Activated CD4-positive, alpha-beta T cell treated with anti-CD3 and anti-CD28 coated beads for 36 hours (primary cell): ENCODE measurements at regions of chr13 and their contacts with region 1.

Region 1: DNA sequence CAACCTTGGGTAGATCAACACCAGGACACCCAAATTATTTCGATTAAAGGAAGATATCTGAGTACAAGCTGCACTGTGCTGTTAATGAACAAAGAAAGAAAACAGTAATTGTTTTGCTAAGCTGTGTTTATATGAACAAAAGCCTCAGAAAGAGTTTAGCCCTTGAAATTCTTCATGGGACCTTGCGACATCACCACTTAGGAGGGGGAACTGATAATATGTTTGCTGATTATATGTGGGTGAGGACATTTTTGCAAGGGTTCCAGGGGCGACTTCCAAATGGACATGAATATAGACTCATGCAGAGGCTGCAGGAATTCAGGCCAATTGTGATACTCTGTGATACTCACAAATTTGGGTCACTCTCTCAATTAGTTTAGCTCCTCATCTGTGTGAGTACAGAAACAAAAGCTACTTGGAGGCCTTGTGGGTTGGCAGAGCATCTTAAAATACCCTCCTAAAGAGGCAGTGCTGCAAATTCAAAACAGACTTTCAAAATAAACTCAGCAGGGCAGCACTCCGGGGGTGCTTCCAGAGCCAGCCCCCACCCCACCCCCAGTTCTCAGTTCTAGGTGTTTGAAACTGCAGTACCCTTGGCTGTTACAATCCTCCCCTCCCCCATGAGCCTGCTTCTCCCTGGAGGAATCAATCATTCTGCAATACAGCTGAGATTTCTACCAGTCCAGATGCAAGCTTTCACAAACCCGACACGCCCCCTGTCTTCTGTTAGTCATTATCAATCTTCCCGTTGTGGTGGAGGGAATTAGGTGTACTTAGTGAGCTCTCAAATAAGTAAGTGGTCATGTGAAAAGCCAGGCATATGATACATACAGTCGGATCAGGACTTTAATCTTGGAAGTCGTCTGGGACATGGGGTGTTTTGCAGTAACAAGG is 97.0 kb upstream of the MBNL2 start:
- DNase-seq: peak; percentile 69
- ATAC-seq: peak; percentile 61
- H3K4me3 Mint-ChIP-seq: no peak overlapping the region
- H3K27ac Mint-ChIP-seq: no peak overlapping the region
- H3K4me1 Mint-ChIP-seq: peaks cover 36% of the 10 kb centered on the region
- H3K27me3 Mint-ChIP-seq: peaks cover 32% of the 10 kb centered on the region

Region 2: DNA sequence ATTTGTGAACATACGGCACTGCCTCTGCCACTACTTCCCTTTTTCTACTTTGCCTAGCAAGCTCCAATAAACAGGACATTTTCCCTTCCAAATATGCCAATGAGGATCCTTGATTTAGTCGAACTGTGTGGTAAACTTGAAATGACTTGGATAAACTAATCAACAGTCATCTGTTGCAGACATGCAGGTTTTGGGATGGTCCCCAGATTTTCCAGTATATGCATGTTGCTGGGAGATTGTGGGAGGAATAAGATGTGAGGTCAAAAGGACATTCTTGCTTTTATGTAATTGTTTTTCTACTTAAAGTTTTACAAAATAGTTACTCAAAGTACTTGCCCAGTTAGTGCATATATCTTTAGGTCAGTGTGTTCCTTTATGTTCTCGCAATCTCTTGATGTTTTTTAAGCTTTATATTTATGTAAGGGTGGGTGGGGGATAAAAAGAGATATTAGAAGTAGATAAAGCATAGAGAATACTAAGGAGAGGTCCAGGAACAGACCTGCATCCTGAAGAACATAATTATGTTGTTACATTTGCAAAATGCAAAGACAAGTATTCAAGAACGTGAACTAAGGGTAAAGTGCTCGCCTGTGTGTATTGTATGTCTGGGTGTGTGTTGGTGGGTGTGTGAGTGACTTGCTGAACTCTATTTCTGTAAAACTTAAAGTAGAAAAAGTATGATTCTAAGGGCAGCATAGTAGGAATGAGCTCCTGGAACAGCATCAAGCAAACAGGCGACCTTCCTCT is 42.5 kb before region 1 on chr13:
- CTCF ChIA-PET with region 1: no interaction called
- POLR2A ChIA-PET with region 1: no interaction called
- intact Hi-C with region 1: no loop called
- DNase-seq: no peak
- ATAC-seq: no peak
- H3K4me3 Mint-ChIP-seq: no peak overlapping the region
- H3K27ac Mint-ChIP-seq: no peak overlapping the region
- H3K4me1 Mint-ChIP-seq: no peaks in the 10 kb centered on the region
- H3K27me3 Mint-ChIP-seq: peaks cover 4% of the 10 kb centered on the region

Region 3: GRCh38 chr13:97109841-97110492 is 15.2 kb before region 1 on chr13:
- CTCF ChIA-PET with region 1: interaction called, 24 read pairs
- POLR2A ChIA-PET with region 1: no interaction called
- intact Hi-C with region 1: no loop called
- DNase-seq: peak; percentile 88
- ATAC-seq: peak; percentile 93
- H3K4me3 Mint-ChIP-seq: no peak overlapping the region
- H3K27ac Mint-ChIP-seq: no peak overlapping the region
- H3K4me1 Mint-ChIP-seq: peaks cover 14% of the 10 kb centered on the region
- H3K27me3 Mint-ChIP-seq: peaks cover 12% of the 10 kb centered on the region

Region 4: DNA sequence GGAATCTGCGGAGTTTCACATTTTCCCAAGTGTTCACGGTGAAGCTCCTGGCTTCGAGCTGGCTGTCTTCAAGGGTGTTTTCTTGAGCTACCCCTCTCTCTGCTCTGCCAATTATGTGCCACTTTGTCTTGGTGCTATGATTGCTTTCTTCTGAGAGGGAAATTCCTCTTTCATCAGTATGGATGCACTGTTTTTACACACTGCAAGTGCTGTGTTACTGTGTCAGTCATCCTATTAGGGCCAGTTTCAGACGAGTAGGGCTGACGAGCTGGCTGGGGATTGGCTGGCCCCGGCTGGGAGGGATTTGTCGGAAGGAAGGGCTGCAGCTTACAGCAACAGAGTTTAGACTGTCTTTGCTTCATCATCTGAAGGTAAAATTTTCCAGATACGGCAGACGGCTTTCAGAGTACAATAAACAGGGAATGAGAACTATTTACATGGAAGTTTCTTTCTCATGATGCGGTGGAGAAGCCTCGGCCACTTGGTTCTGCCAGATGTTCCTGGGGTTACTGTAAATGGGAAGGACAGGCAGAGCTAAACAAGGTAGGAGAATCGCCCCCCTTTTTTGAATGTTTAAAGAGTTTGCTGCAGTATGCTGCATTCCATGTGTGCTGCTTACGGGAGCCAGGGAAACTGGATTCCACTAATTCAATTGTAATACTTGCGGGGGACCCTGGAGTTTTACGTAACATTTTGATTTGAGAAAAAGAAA is 97.0 kb after region 1 on chr13 and contains the start of gene MBNL2:
- CTCF ChIA-PET with region 1: interaction called, 3 read pairs
- POLR2A ChIA-PET with region 1: interaction called, 3 read pairs
- intact Hi-C with region 1: loop called in 1 of 2 experiments (anchors 1 kb)
- DNase-seq: peak; percentile 93
- ATAC-seq: peak; percentile 98
- H3K4me3 Mint-ChIP-seq: peak within 1 kb of the TSS; percentile 80
- H3K27ac Mint-ChIP-seq: peak within 1 kb of the TSS; percentile 95
- H3K4me1 Mint-ChIP-seq: peaks cover 31% of the 10 kb centered on the region
- H3K27me3 Mint-ChIP-seq: no peaks in the 10 kb centered on the region
- total RNA-seq, gene MBNL2: 16.7 to 24.5 TPM

Region 5: DNA sequence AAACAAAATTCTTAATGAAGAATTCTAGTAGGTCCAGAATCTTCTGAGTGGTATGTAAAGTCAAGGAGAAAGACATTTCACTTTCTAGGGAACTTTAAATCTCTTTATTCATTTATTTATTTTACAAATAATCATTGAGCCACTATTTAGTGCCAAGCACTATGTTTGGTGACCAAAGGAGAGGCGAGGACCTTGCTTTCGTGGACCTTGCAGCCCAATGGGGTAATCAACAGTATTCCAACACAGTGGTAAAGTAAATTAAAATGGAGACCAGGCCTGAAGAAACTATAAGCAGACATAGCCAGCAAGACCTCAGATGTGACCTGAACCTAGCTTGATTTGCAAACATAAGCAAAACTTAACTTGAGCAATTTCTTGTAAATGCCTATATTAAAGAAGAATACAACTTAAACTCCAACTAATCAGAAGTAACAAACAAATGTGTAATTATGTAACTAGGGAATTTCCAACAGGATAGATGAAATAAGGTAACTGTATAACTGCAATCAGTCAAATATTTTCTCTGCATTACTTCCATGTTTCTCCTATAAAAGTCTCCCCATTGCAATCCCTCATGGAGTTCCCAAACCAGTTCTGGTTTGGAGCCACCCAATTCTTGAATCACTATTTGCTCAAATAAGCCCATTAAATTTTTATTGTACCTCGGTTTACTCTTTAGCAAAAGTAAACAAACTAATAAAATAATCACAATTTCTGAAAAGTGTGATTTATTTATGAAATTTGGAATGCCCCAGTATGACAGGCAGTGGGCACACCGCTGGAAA is 164.5 kb after region 1 on chr13:
- CTCF ChIA-PET with region 1: no interaction called
- POLR2A ChIA-PET with region 1: no interaction called
- intact Hi-C with region 1: loop called (anchors 1 kb)
- DNase-seq: no peak
- ATAC-seq: no peak
- H3K4me3 Mint-ChIP-seq: no peak overlapping the region
- H3K27ac Mint-ChIP-seq: peak overlapping the region; percentile 74
- H3K4me1 Mint-ChIP-seq: peaks cover 44% of the 10 kb centered on the region
- H3K27me3 Mint-ChIP-seq: no peaks in the 10 kb centered on the region

Region 6: DNA sequence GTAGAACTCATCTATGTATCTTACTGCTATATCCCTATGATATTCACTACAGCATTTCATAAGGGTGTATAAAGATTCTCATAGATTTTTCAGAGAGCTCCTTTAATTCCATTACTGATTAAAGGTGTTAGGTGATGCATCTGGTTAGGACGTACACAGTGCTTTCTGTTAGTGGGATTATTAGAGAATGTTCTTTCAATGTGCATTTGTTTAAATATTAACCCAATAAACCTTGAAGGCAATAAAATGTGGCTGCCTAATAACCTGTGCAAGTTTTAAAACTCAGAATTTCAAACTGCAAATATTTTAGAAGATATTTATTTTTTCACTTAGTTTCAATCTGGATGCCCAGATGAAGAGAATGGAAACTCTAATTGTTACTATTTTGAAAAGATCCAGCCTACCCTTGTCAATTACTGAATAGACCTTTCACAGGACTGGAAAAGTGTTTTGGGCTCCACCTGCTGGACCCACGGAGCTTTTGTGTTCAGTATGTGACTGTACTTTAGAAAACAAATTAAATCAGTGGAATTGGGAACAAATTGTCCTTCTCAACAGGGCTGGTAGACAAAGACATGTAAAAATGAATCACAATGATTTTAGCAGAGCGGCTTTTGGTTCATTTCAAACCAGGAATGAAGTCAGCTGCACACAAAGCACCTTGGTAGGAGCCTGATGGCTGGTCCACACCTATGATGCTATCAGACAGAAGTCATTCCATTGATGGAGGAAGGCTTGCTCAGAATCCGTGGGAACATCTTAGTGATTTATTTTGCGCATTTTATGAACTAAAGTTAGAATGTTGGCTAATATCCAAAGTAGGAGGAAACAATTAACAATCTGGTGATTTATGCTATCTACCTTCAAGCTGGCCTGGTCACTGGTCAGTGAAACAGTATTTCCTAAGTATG is 219.4 kb after region 1 on chr13:
- CTCF ChIA-PET with region 1: interaction called, 5 read pairs
- POLR2A ChIA-PET with region 1: no interaction called
- intact Hi-C with region 1: loop called in 1 of 2 experiments (anchors 5 kb)
- DNase-seq: peak; percentile 73
- ATAC-seq: peak; percentile 80
- H3K4me3 Mint-ChIP-seq: no peak overlapping the region
- H3K27ac Mint-ChIP-seq: no peak overlapping the region
- H3K4me1 Mint-ChIP-seq: peaks cover 8% of the 10 kb centered on the region
- H3K27me3 Mint-ChIP-seq: no peaks in the 10 kb centered on the region

Region 7: GRCh38 chr13:97539651-97540610 is 414.8 kb after region 1 on chr13:
- CTCF ChIA-PET with region 1: no interaction called
- POLR2A ChIA-PET with region 1: no interaction called
- intact Hi-C with region 1: loop called in 1 of 2 experiments (anchors 5 kb)
- DNase-seq: no peak
- ATAC-seq: peak; percentile 90
- H3K4me3 Mint-ChIP-seq: no peak overlapping the region
- H3K27ac Mint-ChIP-seq: no peak overlapping the region
- H3K4me1 Mint-ChIP-seq: peaks cover 7% of the 10 kb centered on the region
- H3K27me3 Mint-ChIP-seq: peaks cover 5% of the 10 kb centered on the region

Region 8: GRCh38 chr13:97700306-97700848 is 575.2 kb after region 1 on chr13:
- CTCF ChIA-PET with region 1: no interaction called
- POLR2A ChIA-PET with region 1: no interaction called
- intact Hi-C with region 1: no loop called
- DNase-seq: no peak
- ATAC-seq: no peak
- H3K4me3 Mint-ChIP-seq: no peak overlapping the region
- H3K27ac Mint-ChIP-seq: no peak overlapping the region
- H3K4me1 Mint-ChIP-seq: no peaks in the 10 kb centered on the region
- H3K27me3 Mint-ChIP-seq: peaks cover 6% of the 10 kb centered on the region